ENCODE measurements at regions of chr1 and their contacts with region 1.

Region 1: GRCh38 chr1:150979092-150980056 is 2.7 kb upstream of the ANXA9 start:
- DNase-seq: peak; percentile 73
- H3K4me3 ChIP-seq: no peak overlapping the region
- H3K27ac ChIP-seq: no peak overlapping the region
- H3K4me1 ChIP-seq: peaks cover 47% of the 10 kb centered on the region
- H3K27me3 ChIP-seq: no peaks in the 10 kb centered on the region
- CTCF ChIP-seq: peak; percentile 100

Region 2: DNA sequence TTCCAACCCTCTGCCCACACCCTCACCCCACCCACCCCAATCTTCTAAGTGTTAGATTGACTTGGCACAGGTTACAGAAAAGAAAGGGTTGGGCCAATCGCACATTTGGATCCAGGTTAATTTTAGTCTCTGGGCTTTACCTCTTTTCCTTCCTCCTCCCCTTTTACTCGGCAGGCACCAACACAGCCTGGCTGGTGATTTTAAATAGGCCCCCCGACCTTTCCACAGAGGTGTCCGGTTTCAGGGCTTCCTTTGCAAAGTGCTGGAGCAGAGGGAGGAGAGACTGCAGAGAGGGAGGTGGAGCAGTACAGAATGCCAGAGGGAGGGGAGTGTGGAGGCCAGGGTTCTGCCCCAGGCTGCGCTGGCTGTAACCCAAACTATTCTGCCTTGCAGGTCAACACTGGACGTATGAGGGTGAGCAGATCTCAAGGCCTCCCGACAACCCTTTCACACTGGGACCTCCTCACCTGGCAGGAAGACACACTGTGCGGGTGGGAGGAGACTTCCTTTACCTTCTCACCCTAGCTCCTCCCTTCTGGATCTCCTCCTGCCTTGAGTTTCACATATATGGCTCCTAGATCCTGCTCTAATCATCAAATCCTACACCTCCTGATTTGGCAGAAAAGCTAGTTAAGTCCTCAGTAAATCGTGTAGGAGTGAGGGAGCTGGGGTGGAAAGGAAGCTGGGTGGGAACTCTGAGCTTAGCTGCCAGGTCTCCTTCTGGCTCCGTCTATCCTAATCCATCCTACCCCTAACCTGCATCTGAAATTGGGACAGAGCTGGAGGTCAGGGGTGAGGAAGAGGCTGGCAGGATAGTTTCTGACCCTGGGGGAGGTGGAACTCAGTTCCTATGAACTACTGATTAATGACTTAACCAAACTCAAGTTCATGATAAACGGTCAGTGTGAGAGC is 719.4 kb before region 1 on chr1:
- CTCF ChIA-PET with region 1: no interaction called
- dilution Hi-C with region 1: no loop called
- in situ Hi-C with region 1: no loop called
- intact Hi-C with region 1: loop called (anchors 5 kb)
- DNase-seq: peak; percentile 56
- H3K4me3 ChIP-seq: peak overlapping the region in 2 of 3 experiments; percentile 2 to 11
- H3K27ac ChIP-seq: peak overlapping the region; percentile 19
- H3K4me1 ChIP-seq: peaks cover 45% of the 10 kb centered on the region
- H3K27me3 ChIP-seq: no peaks in the 10 kb centered on the region
- CTCF ChIP-seq: no peak

Region 3: GRCh38 chr1:150995896-150996295 is 16.5 kb after region 1 on chr1:
- CTCF ChIA-PET with region 1: interaction called, 4 read pairs
- dilution Hi-C with region 1: no loop called
- in situ Hi-C with region 1: no loop called
- intact Hi-C with region 1: loop called (anchors 1 kb)
- DNase-seq: no peak
- H3K4me3 ChIP-seq: no peak overlapping the region
- H3K27ac ChIP-seq: no peak overlapping the region
- H3K4me1 ChIP-seq: no peaks in the 10 kb centered on the region
- H3K27me3 ChIP-seq: no peaks in the 10 kb centered on the region
- CTCF ChIP-seq: peak; percentile 42 to 59

Region 4: DNA sequence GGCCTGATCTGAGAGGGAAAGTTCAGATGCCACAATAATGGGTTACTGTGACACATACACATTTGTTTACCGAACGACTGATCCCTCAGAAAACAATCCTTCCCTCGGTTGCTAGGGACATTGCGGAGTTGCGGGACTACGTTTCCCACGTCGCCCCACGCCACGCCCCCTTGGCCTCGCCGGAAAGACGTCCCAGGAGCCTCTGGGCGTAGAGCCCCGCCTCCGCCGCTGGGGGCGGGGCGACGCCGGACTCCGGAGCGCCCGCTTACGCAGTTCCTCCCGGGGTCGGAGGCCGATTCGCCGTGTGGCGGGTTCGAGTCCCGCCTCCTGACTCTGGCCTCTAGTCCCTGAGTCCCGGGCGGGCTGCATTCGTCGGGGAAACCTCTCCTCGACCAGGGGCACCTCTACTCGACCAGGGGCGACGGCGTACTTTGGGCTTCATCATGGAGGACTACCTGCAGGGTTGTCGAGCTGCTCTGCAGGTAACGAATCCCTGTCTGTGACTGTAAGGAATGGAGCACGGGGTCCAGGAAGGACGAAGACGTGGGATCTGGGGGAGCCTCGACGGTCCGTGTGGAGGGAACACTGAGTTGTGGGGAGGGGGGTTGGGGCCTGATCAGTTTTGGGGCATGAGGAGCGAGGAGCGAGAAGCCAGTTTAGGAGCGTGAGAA is 29.0 kb after region 1 on chr1 and contains the start of gene PRUNE1:
- CTCF ChIA-PET with region 1: interaction called, 3 read pairs
- dilution Hi-C with region 1: no loop called
- in situ Hi-C with region 1: no loop called
- intact Hi-C with region 1: loop called (anchors 2 kb)
- DNase-seq: peak; percentile 93
- H3K4me3 ChIP-seq: peak within 1 kb of the TSS; percentile 78 to 93 (median 80)
- H3K27ac ChIP-seq: peak within 1 kb of the TSS; percentile 97
- H3K4me1 ChIP-seq: peaks cover 47% of the 10 kb centered on the region
- H3K27me3 ChIP-seq: no peaks in the 10 kb centered on the region
- CTCF ChIP-seq: no peak
- total RNA-seq, gene PRUNE1: 9.4 to 16.3 TPM

Region 5: GRCh38 chr1:151146412-151147140 is 167.2 kb after region 1 on chr1 and contains the start of gene SEMA6C:
- CTCF ChIA-PET with region 1: no interaction called
- dilution Hi-C with region 1: no loop called
- in situ Hi-C with region 1: no loop called
- intact Hi-C with region 1: loop called (anchors 5 kb)
- DNase-seq: peak; percentile 90
- H3K4me3 ChIP-seq: peak within 1 kb of the TSS; percentile 34 to 69 (median 60)
- H3K27ac ChIP-seq: no peak within 1 kb of the TSS
- H3K4me1 ChIP-seq: peaks cover 15% of the 10 kb centered on the region
- H3K27me3 ChIP-seq: no peaks in the 10 kb centered on the region
- CTCF ChIP-seq: no peak
- total RNA-seq, gene SEMA6C: 0.50 to 1.6 TPM

Region 6: DNA sequence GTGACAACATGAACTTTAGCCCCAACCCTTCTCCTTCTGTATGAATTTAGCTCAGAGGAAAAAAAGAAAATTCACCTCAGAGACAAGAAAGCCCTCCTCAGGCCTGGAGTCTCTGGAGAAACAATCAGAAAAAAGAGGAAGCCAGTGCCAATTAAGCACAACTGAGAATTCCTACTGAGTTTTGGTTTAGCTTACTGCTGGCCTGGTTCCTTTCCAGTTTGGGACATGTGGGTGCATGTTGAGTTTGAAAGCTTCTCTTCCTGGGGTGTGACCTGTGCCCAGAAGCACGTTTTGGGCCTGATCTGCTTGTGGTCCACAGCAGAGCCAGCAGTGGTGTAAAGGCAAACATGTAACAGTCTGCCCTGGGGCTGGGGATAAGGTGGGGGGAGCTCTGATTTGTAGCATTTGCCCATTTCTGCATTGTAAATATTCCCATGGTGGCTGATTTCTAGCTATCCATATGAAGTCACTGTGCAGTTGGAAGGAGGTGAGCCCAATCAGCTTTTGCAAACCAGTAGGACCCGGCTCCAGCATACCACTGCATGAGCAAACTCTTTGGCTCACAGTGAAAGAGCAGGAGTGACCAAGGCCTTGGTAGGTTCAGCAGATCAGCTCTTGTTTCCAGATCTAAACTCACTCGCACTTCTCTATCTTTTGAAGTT is 878.8 kb after region 1 on chr1:
- CTCF ChIA-PET with region 1: no interaction called
- dilution Hi-C with region 1: no loop called
- in situ Hi-C with region 1: no loop called
- intact Hi-C with region 1: no loop called
- DNase-seq: peak; percentile 61
- H3K4me3 ChIP-seq: no peak overlapping the region
- H3K27ac ChIP-seq: peak overlapping the region; percentile 23
- H3K4me1 ChIP-seq: peaks cover 28% of the 10 kb centered on the region
- H3K27me3 ChIP-seq: no peaks in the 10 kb centered on the region
- CTCF ChIP-seq: no peak